ENCODE measurements at regions of chr7 and their contacts with region 1.

Region 1: GRCh38 chr7:69859342-69859741 is 261.1 kb downstream of the AUTS2 start:
- DNase-seq: no peak
- CTCF ChIP-seq: no peak

Region 2: GRCh38 chr7:69845721-69846495 is 13.4 kb before region 1 on chr7:
- CTCF ChIA-PET with region 1: interaction called, 17 read pairs
- POLR2A ChIA-PET with region 1: no interaction called
- DNase-seq: no peak
- CTCF ChIP-seq: no peak